Activated T-helper 2 cell treated with anti-CD3 and anti-CD28 coated beads, Interferon-gamma antibody, Interleukin-2, Interleukin-4, amounts not matched to agents 10 μg/mL and 5 μg/mL and 100 μg/mL, durations not matched to agents 14 hours and 24 hours and 36 hours (primary cell): ENCODE measurements at regions of chr12 and their contacts with region 1.

Region 1: DNA sequence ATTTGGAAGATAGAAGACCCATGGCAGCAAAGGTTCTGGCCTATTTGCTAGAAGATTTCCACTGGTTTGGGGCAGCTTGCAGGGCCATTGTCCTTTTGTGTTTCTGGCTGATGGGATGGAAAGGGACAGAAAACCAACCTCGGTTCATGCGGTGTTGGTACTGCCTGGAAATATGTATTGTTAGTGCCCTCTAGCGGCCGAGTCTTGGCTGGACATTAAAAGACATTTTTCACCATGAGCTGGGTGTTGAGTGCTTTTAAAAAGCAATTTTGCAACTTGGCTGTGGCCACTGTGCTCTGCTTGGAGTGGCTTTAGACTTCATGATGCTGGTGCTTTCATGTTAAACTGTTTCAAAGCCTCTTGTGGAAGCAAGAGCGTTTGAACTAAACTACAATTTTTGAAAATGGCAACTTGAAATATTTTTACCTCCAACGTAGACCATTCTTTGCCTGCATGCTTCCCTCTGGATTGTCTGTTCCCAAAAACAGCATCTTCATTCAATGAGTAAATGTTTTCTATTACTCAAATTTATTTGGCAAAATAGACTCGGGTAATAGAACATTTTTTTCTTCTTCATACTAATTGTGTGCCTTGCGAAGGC is 102.7 kb upstream of the TBX5 start:
- DNase-seq: peak; percentile 34
- H3K4me3 Mint-ChIP-seq: no peak overlapping the region
- H3K27ac Mint-ChIP-seq: no peak overlapping the region
- H3K4me1 Mint-ChIP-seq: no peaks in the 10 kb centered on the region
- H3K27me3 Mint-ChIP-seq: peaks cover 2% of the 10 kb centered on the region

Region 2: DNA sequence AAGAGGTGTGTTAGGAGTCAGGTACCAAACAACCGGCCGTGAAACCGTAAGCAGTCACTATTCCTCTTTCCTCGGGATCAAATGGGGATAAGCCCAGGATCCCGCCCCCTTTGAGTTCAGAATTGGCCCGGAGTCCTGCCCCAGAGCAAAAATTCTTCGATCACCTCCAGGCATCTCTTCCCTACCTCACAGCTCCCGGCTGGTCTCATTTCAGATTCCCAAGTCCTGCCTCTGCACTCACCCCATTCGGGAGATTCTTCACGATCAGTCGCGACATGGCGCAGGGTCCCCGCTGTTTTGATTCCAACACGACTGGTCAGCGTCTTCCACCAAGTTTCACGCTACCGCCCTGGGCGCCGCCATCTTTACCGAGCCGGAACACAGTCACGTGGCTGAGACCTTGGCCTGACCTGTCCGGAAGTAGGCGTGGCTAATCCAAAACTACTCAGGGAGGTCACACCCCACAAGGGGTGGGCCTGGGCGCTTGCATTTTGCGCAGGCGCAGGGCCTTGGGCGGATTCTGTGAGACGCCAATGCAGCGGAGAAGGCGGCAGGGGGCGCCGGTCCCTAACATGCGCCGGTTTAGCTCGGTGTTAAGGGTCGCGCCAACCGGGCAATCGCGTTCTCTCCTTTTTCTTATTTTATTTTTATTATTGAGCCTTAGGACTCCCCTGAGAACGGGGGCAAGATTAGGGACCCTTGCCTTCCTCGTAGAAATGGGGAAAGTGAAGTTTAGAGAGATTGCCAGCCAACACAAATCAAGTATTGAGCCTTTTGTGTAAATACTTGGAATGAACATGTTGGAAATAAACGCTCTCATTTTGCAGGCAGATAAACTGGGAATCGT is 542.5 kb before region 1 on chr12 and contains the start of gene RBM19:
- intact Hi-C with region 1: loop called (anchors 1 kb)
- DNase-seq: peak; percentile 95
- H3K4me3 Mint-ChIP-seq: peak within 1 kb of the TSS; percentile 100
- H3K27ac Mint-ChIP-seq: peak within 1 kb of the TSS; percentile 100
- H3K4me1 Mint-ChIP-seq: peaks cover 48% of the 10 kb centered on the region
- H3K27me3 Mint-ChIP-seq: peaks cover 2% of the 10 kb centered on the region
- total RNA-seq, gene RBM19: 89.6 and 96.8 TPM in 2 replicates

Region 3: GRCh38 chr12:113980537-113981337 is 527.9 kb before region 1 on chr12:
- intact Hi-C with region 1: loop called (anchors 1 kb)
- DNase-seq: peak; percentile 13
- H3K4me3 Mint-ChIP-seq: no peak overlapping the region
- H3K27ac Mint-ChIP-seq: no peak overlapping the region
- H3K4me1 Mint-ChIP-seq: no peaks in the 10 kb centered on the region
- H3K27me3 Mint-ChIP-seq: no peaks in the 10 kb centered on the region

Region 4: GRCh38 chr12:114425031-114425626 is 83.5 kb before region 1 on chr12:
- intact Hi-C with region 1: no loop called
- DNase-seq: no peak
- H3K4me3 Mint-ChIP-seq: no peak overlapping the region
- H3K27ac Mint-ChIP-seq: no peak overlapping the region
- H3K4me1 Mint-ChIP-seq: no peaks in the 10 kb centered on the region
- H3K27me3 Mint-ChIP-seq: no peaks in the 10 kb centered on the region